Gastrocnemius medialis (tissue), 4 donors: ENCODE measurements at regions of chrX and their contacts with region 1.

Region 1: GRCh38 chrX:132751063-132751690 is 207.3 kb downstream of the HS6ST2 start:
- DNase-seq: no peak
- ATAC-seq: peak; percentile 27 to 40
- H3K4me3 ChIP-seq: no peak overlapping the region
- H3K27ac ChIP-seq: peak overlapping the region in 2 of 4 donors; percentile 66 to 70
- H3K4me1 ChIP-seq: peaks cover 0 to 12% of the 10 kb centered on the region in 2 donors
- H3K27me3 ChIP-seq: no peaks in the 10 kb centered on the region
- CTCF ChIP-seq: no peak
- POLR2A ChIP-seq: no peak

Region 2: GRCh38 chrX:132393992-132394391 is 357.2 kb before region 1 on chrX:
- in situ Hi-C with region 1: no loop called
- intact Hi-C with region 1: no loop called
- DNase-seq: no peak
- ATAC-seq: no peak
- H3K4me3 ChIP-seq: no peak overlapping the region
- H3K27ac ChIP-seq: no peak overlapping the region
- H3K4me1 ChIP-seq: no peaks in the 10 kb centered on the region
- H3K27me3 ChIP-seq: no peaks in the 10 kb centered on the region
- CTCF ChIP-seq: no peak
- POLR2A ChIP-seq: no peak

Region 3: GRCh38 chrX:132831336-132831973 is 80.3 kb after region 1 on chrX:
- in situ Hi-C with region 1: no loop called
- intact Hi-C with region 1: loop called (anchors 5 kb)
- DNase-seq: no peak
- ATAC-seq: peak in 1 of 2 donors; percentile 66
- H3K4me3 ChIP-seq: no peak overlapping the region
- H3K27ac ChIP-seq: peak overlapping the region in 1 of 4 donors; percentile 28
- H3K4me1 ChIP-seq: no peaks in the 10 kb centered on the region
- H3K27me3 ChIP-seq: no peaks in the 10 kb centered on the region
- CTCF ChIP-seq: no peak
- POLR2A ChIP-seq: no peak